ENCODE measurements at regions of chr19 and their contacts with region 1.

Region 1: GRCh38 chr19:3035542-3036118 is 6.5 kb upstream of the TLE2 start:
- DNase-seq: peak; percentile 99
- ATAC-seq: peak; percentile 95

Region 2: GRCh38 chr19:2782936-2783780 is 252.5 kb before region 1 on chr19 and contains the start of gene SGTA:
- intact Hi-C with region 1: no loop called
- DNase-seq: peak; percentile 98
- ATAC-seq: peak; percentile 95
- total RNA-seq, gene SGTA: 38.5 TPM

Region 3: DNA sequence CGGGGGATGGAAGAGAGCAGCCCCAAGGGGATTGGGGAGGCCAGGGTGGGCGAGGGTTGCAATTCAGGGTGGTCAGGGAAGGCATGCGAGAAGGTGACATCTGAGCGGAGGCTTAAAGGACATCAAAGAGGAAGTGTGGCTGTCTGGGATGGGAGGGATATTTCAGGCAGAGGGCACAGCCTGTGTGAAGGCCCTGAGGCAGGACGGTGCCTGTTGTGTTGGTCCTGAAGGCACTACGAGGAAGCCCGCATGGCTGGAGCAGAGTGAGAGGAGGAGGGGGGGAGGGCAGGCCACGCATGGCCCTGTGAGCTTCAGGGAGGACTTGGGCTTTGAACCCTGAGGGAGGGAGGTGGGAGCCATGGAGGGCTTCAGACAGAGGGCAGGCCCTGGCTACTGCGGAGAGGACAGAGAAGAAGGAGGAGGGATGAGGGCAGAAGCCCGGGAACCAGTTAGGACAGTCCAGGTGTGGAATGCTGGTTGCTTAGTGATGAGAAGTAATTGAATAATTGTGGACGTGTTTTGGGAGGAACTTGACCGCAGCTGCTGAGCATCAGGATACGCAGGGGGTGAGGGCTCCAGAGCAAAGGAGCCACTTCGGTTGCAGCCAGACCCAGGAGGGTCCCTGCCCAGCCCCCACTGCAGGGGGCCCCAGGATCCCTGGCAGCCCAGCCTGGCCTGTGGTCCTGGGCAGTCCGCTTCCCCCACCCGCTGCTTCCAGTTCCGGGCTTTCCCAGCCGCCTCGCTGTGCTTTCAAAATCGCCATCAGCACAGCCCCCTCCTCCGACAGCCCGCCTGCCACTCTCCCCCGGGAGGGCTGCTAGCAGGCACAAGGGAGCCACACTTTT is 52.1 kb before region 1 on chr19:
- intact Hi-C with region 1: loop called (anchors 10 kb)
- DNase-seq: peak; percentile 77
- ATAC-seq: peak; percentile 80

Region 4: GRCh38 chr19:2997720-2998119 is 37.9 kb before region 1 on chr19:
- intact Hi-C with region 1: no loop called
- DNase-seq: no peak
- ATAC-seq: peak; percentile 24